Activated B cell treated with CpG ODN at 0.5 μM for 24 hours (primary cell): ENCODE measurements at regions of chr5 and their contacts with region 1.

Region 1: GRCh38 chr5:124162779-124163532 is 583.5 kb downstream of the ZNF608 start:
- DNase-seq: no peak
- ATAC-seq: peak; percentile 60
- H3K4me3 Mint-ChIP-seq: peak overlapping the region; percentile 64
- H3K27ac Mint-ChIP-seq: peak overlapping the region; percentile 46
- H3K4me1 Mint-ChIP-seq: peaks cover 50% of the 10 kb centered on the region
- H3K27me3 Mint-ChIP-seq: no peaks in the 10 kb centered on the region
- CTCF ChIP-seq: no peak

Region 2: GRCh38 chr5:123157791-123158581 is 1005.0 kb before region 1 on chr5:
- CTCF ChIA-PET with region 1: no interaction called
- POLR2A ChIA-PET with region 1: no interaction called
- intact Hi-C with region 1: no loop called
- DNase-seq: no peak
- ATAC-seq: no peak
- H3K4me3 Mint-ChIP-seq: no peak overlapping the region
- H3K27ac Mint-ChIP-seq: no peak overlapping the region
- H3K4me1 Mint-ChIP-seq: no peaks in the 10 kb centered on the region
- H3K27me3 Mint-ChIP-seq: peaks cover 16% of the 10 kb centered on the region
- CTCF ChIP-seq: no peak

Region 3: DNA sequence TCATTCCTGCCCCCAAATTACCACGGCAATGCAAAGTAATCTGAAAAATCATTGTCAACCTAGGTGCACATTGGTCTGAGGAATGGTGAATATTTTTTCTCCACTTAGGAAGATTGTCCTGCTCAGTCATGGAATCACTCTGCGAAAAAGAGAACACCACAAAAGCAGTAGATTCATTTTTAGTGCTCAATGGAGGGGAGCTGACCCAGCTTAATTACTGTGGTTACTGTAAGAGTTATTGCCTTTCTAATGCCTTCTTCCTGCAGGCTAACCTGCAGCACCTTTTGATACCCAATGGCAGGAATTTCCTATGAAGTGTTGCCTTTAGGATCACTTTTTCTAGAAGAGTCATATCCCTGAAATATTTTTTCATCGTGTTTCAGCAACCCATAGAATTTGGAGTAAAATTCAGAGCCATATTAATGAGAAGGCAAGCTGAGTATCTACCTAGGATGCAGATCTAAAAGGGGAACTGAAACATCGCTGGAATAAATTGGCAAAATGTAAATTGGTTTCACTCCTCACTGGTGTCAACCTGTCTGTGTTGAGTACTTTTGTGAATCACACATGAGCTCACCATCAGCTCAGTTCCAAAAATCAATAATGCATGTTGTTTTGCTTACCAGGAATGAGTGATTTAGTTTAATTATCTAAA is 186.4 kb before region 1 on chr5:
- CTCF ChIA-PET with region 1: no interaction called
- POLR2A ChIA-PET with region 1: no interaction called
- intact Hi-C with region 1: loop called (anchors 10 kb)
- DNase-seq: no peak
- ATAC-seq: peak; percentile 90
- H3K4me3 Mint-ChIP-seq: no peak overlapping the region
- H3K27ac Mint-ChIP-seq: no peak overlapping the region
- H3K4me1 Mint-ChIP-seq: peaks cover 30% of the 10 kb centered on the region
- H3K27me3 Mint-ChIP-seq: no peaks in the 10 kb centered on the region
- CTCF ChIP-seq: no peak